Activated T-helper 2 cell treated with anti-CD3 and anti-CD28 coated beads, Interferon-gamma antibody, Interleukin-2, Interleukin-4, amounts not matched to agents 10 μg/mL and 5 μg/mL and 100 μg/mL, durations not matched to agents 14 hours and 24 hours and 36 hours (primary cell): ENCODE measurements at regions of chr19 and their contacts with region 1.

Region 1: GRCh38 chr19:41310033-41310758 is at the start of gene CCDC97:
- DNase-seq: peak; percentile 88
- H3K4me3 Mint-ChIP-seq: peak within 1 kb of the TSS; percentile 97
- H3K27ac Mint-ChIP-seq: peak within 1 kb of the TSS; percentile 96
- H3K4me1 Mint-ChIP-seq: peaks cover 51% of the 10 kb centered on the region
- H3K27me3 Mint-ChIP-seq: no peaks in the 10 kb centered on the region
- total RNA-seq, gene CCDC97: 33.5 and 34.4 TPM in 2 replicates

Region 2: GRCh38 chr19:41206926-41207750 is 103.1 kb before region 1 on chr19:
- intact Hi-C with region 1: loop called (anchors 1 kb)
- DNase-seq: no peak
- H3K4me3 Mint-ChIP-seq: no peak overlapping the region
- H3K27ac Mint-ChIP-seq: no peak overlapping the region
- H3K4me1 Mint-ChIP-seq: peaks cover 17% of the 10 kb centered on the region
- H3K27me3 Mint-ChIP-seq: peaks cover 2% of the 10 kb centered on the region

Region 3: DNA sequence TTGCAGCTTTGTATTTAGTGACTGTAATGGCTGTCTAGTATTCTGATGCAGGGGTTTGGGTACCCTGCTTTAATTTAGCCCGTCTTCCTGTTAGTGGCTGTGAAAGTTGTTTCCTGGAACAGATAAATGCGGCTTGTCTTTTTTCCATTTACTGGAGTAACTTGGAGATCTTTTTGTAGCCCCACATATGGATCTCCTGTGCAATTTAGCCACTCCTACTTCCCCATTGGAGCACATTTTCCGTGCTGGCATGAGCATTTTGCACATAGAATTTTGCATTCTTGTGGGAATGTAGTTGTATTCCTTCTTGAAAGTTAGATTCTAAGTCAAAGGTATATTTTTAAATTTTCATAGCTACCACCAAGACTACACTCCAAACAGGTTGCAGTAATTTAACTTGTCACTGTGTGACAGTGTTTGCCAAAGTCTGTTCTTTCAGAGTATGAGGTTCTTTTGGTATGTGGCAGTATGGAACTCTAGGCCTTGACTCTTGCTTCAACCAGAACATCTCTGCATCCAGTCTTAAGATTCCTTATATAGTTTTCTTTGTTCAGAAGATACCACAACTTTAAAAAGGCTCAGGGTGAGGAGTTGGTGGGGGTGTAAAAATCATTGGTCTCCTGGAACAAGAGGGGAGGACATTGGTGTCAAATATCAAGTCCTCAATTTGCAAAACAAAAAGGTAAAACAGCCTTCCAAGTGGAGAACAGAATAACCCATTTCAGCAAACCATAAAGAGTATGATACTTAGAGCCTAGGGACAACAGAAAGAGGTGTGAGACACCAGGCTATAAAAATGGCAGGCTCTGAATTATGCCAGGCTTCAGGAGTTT is 21.3 kb before region 1 on chr19:
- intact Hi-C with region 1: no loop called
- DNase-seq: no peak
- H3K4me3 Mint-ChIP-seq: no peak overlapping the region
- H3K27ac Mint-ChIP-seq: no peak overlapping the region
- H3K4me1 Mint-ChIP-seq: peaks cover 2% of the 10 kb centered on the region
- H3K27me3 Mint-ChIP-seq: no peaks in the 10 kb centered on the region

Region 4: GRCh38 chr19:41327576-41328156 is 17.5 kb after region 1 on chr19:
- intact Hi-C with region 1: loop called (anchors 2 kb)
- DNase-seq: peak; percentile 68
- H3K4me3 Mint-ChIP-seq: peak overlapping the region; percentile 73
- H3K27ac Mint-ChIP-seq: peak overlapping the region; percentile 92
- H3K4me1 Mint-ChIP-seq: peaks cover 50% of the 10 kb centered on the region
- H3K27me3 Mint-ChIP-seq: no peaks in the 10 kb centered on the region

Region 5: GRCh38 chr19:41353466-41354342 is 43.5 kb after region 1 on chr19 and contains the start of gene TGFB1:
- intact Hi-C with region 1: loop called (anchors 2 kb)
- DNase-seq: peak; percentile 90
- H3K4me3 Mint-ChIP-seq: peak within 1 kb of the TSS; percentile 100
- H3K27ac Mint-ChIP-seq: peak within 1 kb of the TSS; percentile 91
- H3K4me1 Mint-ChIP-seq: peaks cover 52% of the 10 kb centered on the region
- H3K27me3 Mint-ChIP-seq: no peaks in the 10 kb centered on the region
- total RNA-seq, gene TGFB1: 125 and 126 TPM in 2 replicates

Region 6: DNA sequence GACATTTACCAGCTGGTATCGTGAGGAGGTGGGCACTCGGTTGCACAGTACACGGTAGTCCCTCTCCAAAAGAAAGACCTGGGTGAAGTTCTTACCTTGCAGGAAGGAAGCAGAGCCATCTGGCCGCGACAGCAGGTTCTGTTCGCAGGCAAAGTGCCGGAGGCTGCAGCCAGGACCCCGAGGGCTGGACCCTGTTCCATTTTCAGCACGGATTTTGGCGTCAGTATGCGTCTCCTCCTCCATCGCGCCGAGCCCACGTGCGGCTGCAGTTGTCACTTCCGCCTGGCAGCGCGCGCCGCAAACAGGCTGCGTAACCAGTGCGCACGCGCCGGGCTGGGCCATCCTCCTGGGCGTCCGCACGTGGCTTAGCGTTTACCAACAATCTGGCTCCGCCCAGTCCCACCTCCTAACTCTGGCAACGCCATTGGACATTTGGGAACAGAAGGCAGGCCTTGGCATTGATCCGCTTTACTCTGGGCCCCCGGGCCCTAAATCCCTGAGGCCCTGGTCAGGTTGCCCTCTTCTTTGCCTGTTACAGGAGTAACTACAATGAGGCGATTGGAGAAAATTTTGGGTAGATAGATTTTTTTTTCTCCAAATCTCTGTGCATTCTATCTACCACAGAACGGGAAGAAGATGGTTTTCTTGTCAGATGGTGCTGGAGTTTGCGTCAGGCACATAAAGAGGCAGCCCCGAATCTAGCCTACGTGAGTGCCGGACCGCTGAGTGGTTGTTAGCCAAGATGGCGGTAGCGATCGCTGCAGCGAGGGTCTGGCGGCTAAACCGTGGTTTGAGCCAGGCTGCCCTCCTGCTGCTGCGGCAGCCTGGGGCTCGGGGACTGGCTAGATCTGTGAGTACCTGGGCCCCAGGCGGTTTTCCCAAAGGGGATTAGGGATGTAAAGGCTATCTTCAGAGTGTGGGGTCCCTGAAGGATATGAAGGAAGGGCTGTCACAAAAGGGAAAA is 87.2 kb after region 1 on chr19 and contains the starts of genes BCKDHA and EXOSC5:
- intact Hi-C with region 1: no loop called
- DNase-seq: peak; percentile 99
- H3K4me3 Mint-ChIP-seq: peak within 1 kb of the TSS; percentile 95
- H3K27ac Mint-ChIP-seq: peak within 1 kb of the TSS; percentile 99
- H3K4me1 Mint-ChIP-seq: peaks cover 26% of the 10 kb centered on the region
- H3K27me3 Mint-ChIP-seq: no peaks in the 10 kb centered on the region
- total RNA-seq, gene BCKDHA: 18.9 and 20.5 TPM in 2 replicates
- total RNA-seq, gene EXOSC5: 50.4 and 54.3 TPM in 2 replicates

Region 7: DNA sequence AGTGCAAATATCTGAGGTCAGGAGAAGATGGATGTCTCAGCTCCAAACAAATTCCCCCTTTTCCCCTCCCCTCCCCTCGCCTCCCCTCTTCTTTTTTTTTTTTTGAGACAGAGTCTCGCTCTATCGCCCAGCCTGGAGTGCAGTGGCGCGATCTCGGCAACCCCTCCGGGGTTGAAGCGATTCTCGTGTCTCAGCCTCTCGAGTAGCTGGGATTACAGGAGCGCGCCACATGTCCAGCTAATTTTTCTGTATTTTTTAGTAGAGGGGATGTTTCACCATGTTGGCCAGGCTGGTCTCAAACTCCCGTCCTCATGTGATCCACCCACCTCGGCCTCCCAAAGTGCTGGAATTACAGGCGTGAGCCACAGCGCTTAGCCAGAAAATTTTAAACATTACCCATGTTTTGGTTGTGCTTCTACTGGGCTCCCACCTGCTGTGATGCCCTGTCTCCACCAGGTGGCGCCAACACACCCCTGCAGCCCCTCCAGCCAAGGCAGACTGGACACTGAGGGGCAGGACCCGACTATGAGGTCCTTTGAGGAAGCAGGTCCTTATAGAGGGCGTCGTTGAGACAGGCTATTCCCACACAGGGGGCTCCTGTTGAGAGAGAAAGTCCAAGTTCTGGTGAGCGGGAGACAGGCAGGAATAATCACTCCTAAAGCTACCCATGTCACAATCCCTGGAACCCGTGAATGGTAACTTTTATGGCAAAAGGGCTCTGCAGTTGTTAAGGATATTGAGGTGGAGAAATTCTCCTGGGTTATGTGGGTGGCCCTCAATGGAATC is 139.1 kb after region 1 on chr19:
- intact Hi-C with region 1: no loop called
- DNase-seq: peak; percentile 63
- H3K4me3 Mint-ChIP-seq: peak overlapping the region; percentile 56
- H3K27ac Mint-ChIP-seq: no peak overlapping the region
- H3K4me1 Mint-ChIP-seq: peaks cover 14% of the 10 kb centered on the region
- H3K27me3 Mint-ChIP-seq: peaks cover 3% of the 10 kb centered on the region

Region 8: DNA sequence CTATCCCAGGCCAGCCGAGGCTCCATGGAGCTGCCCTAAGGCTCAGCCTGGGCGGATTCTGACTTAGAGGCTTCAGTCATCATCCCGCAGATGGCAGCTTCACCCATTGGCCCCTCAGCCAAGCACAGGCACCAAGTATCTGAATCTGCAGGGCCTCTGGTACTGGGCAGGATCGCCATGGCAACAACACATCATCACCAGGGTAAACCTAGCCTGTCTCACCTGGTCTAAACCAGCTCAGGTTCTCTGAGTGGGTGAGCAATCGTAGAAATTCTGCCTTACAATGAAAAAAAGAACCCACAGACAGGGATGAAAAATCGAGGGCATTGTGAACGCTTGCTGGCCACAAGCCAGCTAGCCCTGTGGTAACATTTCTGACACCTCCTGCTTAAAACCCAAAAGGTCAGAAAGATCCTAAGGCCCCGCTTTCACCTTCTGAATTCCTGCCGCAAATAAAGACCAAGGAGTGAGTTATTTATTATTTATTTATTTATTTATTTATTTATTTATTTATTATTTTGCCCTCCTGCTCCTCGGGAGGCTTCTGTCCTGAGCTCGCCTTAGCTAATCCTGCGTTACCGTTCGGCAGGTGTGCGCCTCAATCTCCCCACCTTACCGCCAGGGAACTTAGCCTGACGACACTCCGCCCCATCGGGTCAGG is 253.8 kb after region 1 on chr19:
- intact Hi-C with region 1: loop called (anchors 5 kb)
- DNase-seq: no peak
- H3K4me3 Mint-ChIP-seq: peak overlapping the region; percentile 18
- H3K27ac Mint-ChIP-seq: no peak overlapping the region
- H3K4me1 Mint-ChIP-seq: peaks cover 34% of the 10 kb centered on the region
- H3K27me3 Mint-ChIP-seq: peaks cover 11% of the 10 kb centered on the region